ENCODE measurements at regions of chr2 and their contacts with region 1.

Region 1: DNA sequence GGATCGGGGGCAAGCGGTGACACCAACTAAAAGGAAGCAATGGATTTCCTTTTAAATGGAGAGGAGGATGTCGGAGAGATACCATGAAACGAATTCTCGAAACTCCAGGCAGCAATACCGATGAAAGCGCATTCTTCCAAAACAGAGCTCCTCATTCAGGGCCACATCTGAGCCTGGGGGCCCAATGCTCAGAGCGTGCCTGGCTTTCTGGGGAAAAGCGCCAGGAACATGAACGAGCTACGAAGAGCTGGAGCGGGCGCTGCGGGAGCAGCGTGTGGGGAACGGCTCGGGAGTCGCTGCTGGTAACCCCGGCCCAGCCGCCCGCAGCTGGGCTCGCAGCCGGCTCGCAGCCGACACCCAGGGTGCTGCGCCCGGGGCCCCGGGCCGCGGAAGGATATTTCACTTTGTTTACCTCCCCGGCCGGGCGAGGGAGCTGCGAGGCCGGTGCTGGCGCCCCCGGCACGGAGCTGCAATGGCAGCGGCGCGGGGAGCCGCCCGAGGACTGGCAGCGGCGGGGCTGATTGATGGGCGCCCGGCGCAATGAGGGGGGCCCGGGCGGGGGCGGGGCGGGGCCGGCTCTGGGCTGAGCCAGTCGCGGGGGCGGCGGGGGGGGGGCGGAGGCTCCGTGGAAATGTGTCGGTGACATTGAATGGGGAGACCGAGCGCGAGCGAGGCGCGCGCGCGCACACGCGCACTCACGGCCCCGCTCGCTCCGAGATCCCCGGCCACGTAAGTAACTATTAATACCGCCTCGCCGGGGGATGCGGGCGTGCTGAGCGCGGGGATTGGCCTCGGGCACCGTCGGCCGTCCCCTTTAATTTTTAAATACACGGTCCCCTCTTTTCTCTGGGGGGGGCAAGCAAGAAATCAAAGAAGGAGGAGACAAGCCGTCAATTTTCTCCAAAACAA is at the start of gene TRIB2:
- DNase-seq: peak; percentile 84
- ATAC-seq: peak; percentile 78
- H3K4me3 ChIP-seq: peak within 1 kb of the TSS; percentile 92
- H3K27ac ChIP-seq: peak within 1 kb of the TSS; percentile 98
- H3K4me1 ChIP-seq: peaks cover 14% of the 10 kb centered on the region
- H3K27me3 ChIP-seq: no peaks in the 10 kb centered on the region
- CTCF ChIP-seq: peak; percentile 24; the same call in 1 of the 2 replicates
- POLR2A ChIP-seq: peak; percentile 15; the same call in 1 of the 2 replicates
- RAD21 ChIP-seq: peak; percentile 39
- total RNA-seq, gene TRIB2: 12.7 and 16.1 TPM in 2 replicates

Region 2: DNA sequence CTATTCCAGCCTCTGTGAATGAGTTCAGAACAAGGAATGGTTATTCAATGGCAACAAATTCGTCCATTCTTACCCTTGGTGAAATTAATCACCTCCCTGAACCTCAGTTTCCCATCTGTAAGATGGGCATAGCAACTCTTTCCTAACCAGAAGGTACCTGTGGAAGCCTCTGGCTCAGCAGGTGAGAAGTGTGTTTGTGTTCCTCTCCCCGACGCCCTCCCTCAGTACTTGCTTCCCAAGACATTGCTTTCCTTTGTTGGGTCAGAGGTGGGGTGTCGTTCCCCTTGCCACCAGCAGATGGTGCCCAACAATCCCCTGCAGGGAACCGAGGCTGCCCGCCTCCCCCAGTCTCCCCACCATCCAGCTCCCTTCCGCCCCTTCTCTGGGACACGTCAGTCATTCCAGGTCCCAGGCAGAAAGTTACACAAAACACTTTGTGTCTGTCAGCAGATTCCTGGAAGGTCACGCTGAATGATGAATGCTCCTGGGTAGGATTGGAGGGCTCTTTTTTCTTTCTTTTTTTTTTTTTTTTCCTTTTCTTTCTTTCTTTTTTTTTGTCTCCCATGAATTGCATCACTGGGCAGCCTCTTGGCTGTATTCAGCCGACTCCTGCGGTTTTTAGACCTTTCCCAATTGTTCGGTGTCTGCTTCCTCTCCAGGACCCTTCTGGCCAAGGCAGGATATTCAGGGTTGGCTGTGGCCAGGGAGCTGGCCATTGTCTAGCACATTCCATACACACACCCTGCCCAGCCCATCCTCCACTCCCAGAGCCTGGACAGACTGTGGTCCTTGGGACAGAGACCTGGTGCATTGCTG is 852.8 kb before region 1 on chr2:
- CTCF ChIA-PET with region 1: no interaction called
- POLR2A ChIA-PET with region 1: no interaction called
- dilution Hi-C with region 1: no loop called
- in situ Hi-C with region 1: loop called (anchors 10 kb)
- intact Hi-C with region 1: loop called (anchors 1 kb)
- DNase-seq: peak; percentile 82
- ATAC-seq: peak; percentile 99
- H3K4me3 ChIP-seq: peak overlapping the region; percentile 10; the same call in 1 of the 2 replicates
- H3K27ac ChIP-seq: peak overlapping the region; percentile 66
- H3K4me1 ChIP-seq: peaks cover 2% of the 10 kb centered on the region; the same call in 1 of the 2 replicates
- H3K27me3 ChIP-seq: no peaks in the 10 kb centered on the region; the same call in 1 of the 2 replicates
- CTCF ChIP-seq: peak; percentile 85
- POLR2A ChIP-seq: no peak
- RAD21 ChIP-seq: peak; percentile 93

Region 3: GRCh38 chr2:12044857-12045256 is 671.7 kb before region 1 on chr2:
- CTCF ChIA-PET with region 1: no interaction called
- POLR2A ChIA-PET with region 1: no interaction called
- dilution Hi-C with region 1: no loop called
- in situ Hi-C with region 1: loop called (anchors 10 kb)
- intact Hi-C with region 1: loop called (anchors 2 kb)
- DNase-seq: no peak
- ATAC-seq: no peak
- H3K4me3 ChIP-seq: no peak overlapping the region
- H3K27ac ChIP-seq: no peak overlapping the region
- H3K4me1 ChIP-seq: peaks cover 3% of the 10 kb centered on the region
- H3K27me3 ChIP-seq: no peaks in the 10 kb centered on the region
- CTCF ChIP-seq: no peak
- POLR2A ChIP-seq: no peak
- RAD21 ChIP-seq: no peak

Region 4: DNA sequence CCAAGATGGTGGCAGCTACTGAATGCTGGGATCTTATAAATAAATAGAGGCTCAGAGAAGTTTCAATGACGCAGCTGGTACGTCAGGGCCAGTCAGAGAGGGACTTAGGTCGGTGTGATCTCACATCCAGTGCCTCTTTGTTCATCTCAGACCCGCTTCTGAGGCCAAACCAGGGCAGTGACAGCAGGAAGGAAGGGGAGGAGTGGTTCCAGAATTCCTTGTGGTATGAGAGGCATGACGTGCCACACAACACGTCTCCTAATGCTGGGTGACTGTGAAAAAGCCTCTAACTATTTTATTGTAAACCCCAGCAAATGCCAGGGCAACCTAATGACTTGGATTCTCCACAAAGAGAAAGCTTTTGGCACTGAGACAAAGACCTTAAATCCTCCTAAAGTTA is 546.8 kb before region 1 on chr2:
- CTCF ChIA-PET with region 1: no interaction called
- POLR2A ChIA-PET with region 1: no interaction called
- dilution Hi-C with region 1: no loop called
- in situ Hi-C with region 1: loop called (anchors 10 kb)
- intact Hi-C with region 1: loop called (anchors 2 kb)
- DNase-seq: peak; percentile 90
- ATAC-seq: peak; percentile 78
- H3K4me3 ChIP-seq: no peak overlapping the region
- H3K27ac ChIP-seq: peak overlapping the region; percentile 70
- H3K4me1 ChIP-seq: peaks cover 18% of the 10 kb centered on the region
- H3K27me3 ChIP-seq: no peaks in the 10 kb centered on the region
- CTCF ChIP-seq: no peak
- POLR2A ChIP-seq: no peak
- RAD21 ChIP-seq: no peak

Region 5: DNA sequence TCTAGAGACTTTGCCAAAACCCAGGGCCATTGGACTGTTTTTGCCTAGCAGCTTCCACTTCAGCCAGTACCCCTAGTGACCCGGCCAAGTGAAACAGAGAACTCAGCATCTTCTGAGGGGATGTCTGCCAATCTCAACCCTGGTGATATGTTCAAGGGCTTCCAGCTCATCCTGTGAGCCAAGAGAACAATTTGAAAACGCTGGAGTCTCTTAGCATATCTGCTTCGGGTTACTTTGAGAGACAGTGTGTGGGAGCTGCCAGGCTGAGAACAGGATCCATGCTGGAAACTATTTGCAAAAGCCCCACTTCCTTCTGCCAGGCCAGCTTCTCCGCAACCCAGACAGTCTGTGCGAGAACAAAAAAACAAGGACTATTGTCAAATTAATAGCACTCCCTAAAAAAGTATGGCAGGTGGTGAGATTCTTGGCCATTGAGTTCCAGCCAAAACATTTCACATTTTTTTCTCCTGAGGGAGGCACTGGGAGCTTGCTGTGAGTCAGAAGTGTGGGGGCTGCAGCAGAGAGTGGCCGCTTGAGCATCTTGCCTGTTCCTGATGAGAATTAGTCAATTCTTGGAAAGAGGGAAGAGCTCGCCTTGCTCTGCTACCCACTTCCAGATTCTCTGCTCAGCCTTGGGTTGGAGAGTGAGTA is 395.4 kb before region 1 on chr2:
- CTCF ChIA-PET with region 1: interaction called, 3 read pairs
- POLR2A ChIA-PET with region 1: no interaction called
- dilution Hi-C with region 1: no loop called
- in situ Hi-C with region 1: no loop called
- intact Hi-C with region 1: loop called (anchors 1 kb)
- DNase-seq: peak; percentile 98
- ATAC-seq: peak; percentile 88
- H3K4me3 ChIP-seq: no peak overlapping the region
- H3K27ac ChIP-seq: peak overlapping the region; percentile 12; the same call in 1 of the 2 replicates
- H3K4me1 ChIP-seq: peaks cover 15% of the 10 kb centered on the region
- H3K27me3 ChIP-seq: no peaks in the 10 kb centered on the region
- CTCF ChIP-seq: no peak; the same call in 1 of the 2 replicates
- POLR2A ChIP-seq: no peak
- RAD21 ChIP-seq: peak; percentile 37

Region 6: GRCh38 chr2:12534646-12535263 is 181.8 kb before region 1 on chr2:
- CTCF ChIA-PET with region 1: interaction called, 3 read pairs
- POLR2A ChIA-PET with region 1: interaction called, 4 read pairs
- dilution Hi-C with region 1: no loop called
- in situ Hi-C with region 1: no loop called
- intact Hi-C with region 1: loop called (anchors 1 kb)
- DNase-seq: peak; percentile 97
- ATAC-seq: peak; percentile 89
- H3K4me3 ChIP-seq: peak overlapping the region; percentile 22; the same call in 1 of the 2 replicates
- H3K27ac ChIP-seq: peak overlapping the region; percentile 87
- H3K4me1 ChIP-seq: peaks cover 3% of the 10 kb centered on the region; the same call in 1 of the 2 replicates
- H3K27me3 ChIP-seq: no peaks in the 10 kb centered on the region
- CTCF ChIP-seq: no peak
- POLR2A ChIP-seq: no peak
- RAD21 ChIP-seq: peak; percentile 34

Region 7: GRCh38 chr2:13006829-13007717 is 290.5 kb after region 1 on chr2:
- CTCF ChIA-PET with region 1: interaction called, 12 read pairs
- POLR2A ChIA-PET with region 1: no interaction called
- dilution Hi-C with region 1: no loop called
- in situ Hi-C with region 1: loop called (anchors 5 kb)
- intact Hi-C with region 1: loop called (anchors 1 kb)
- DNase-seq: peak; percentile 65
- ATAC-seq: peak; percentile 95
- H3K4me3 ChIP-seq: no peak overlapping the region
- H3K27ac ChIP-seq: no peak overlapping the region
- H3K4me1 ChIP-seq: 0 out of 2 replicates have a peak, but pooled peaks cover 2% of the 10 kb centered on the region
- H3K27me3 ChIP-seq: 0 out of 2 replicates have a peak, but pooled peaks cover 3% of the 10 kb centered on the region
- CTCF ChIP-seq: peak; percentile 82
- POLR2A ChIP-seq: 0 out of 2 replicates have a peak, but pooled peaks have one; percentile 30
- RAD21 ChIP-seq: peak; percentile 94